ENCODE measurements at regions of chr3 and their contacts with region 1.

Region 1: GRCh38 chr3:196179380-196180308 is 31.6 kb downstream of the ZDHHC19 start:
- DNase-seq: no peak

Region 2: DNA sequence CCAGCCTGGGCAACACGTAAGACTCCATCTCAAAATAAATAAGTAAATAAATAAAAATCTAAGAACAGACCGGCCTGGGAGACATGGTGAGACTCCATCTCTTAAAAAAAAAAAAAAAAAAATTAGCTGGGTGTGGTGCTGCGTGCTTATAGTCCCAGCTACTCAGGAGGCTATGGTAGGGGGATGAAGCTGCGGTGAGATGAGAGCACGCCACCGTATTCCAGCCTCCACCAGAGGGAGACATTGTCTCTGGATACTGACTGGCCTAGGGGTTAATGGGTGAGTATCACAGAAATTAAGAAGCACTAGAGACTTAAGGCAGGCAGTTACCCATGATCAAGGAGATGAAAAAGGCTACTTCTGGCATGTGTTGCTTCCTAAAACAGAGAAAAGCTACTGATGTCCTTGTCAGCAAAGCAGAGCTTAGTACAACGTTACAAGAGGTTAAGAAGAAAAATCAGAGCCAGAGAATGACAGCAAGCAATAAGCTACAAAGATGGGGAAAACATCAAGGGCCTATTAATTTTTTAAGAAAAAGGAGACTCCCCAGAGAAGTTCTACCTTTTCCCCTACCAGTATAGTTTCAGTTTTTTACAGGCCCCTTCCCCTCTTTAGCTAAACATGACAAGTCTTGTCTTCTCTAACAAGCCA is 106.3 kb before region 1 on chr3:
- in situ Hi-C with region 1: loop called (anchors 5 kb)
- DNase-seq: peak; percentile 78 to 93

Region 3: GRCh38 chr3:196914866-196915265 is 735.2 kb after region 1 on chr3:
- in situ Hi-C with region 1: no loop called
- DNase-seq: no peak

Measured in T47D (cell line).